ENCODE measurements at regions of chr16 and their contacts with region 1.

Region 1: GRCh38 chr16:49921791-49922456 is 66.0 kb upstream of the ZNF423 start:
- DNase-seq: peak; percentile 75
- H3K4me3 ChIP-seq: no peak overlapping the region
- H3K27ac ChIP-seq: no peak overlapping the region
- H3K4me1 ChIP-seq: no peaks in the 10 kb centered on the region
- H3K27me3 ChIP-seq: no peaks in the 10 kb centered on the region
- CTCF ChIP-seq: peak; percentile 81

Region 2: GRCh38 chr16:49452578-49452977 is 469.3 kb before region 1 on chr16:
- CTCF ChIA-PET with region 1: interaction called, 11 read pairs
- POLR2A ChIA-PET with region 1: no interaction called
- intact Hi-C with region 1: no loop called
- DNase-seq: no peak
- H3K4me3 ChIP-seq: no peak overlapping the region
- H3K27ac ChIP-seq: no peak overlapping the region
- H3K4me1 ChIP-seq: no peaks in the 10 kb centered on the region
- H3K27me3 ChIP-seq: no peaks in the 10 kb centered on the region
- CTCF ChIP-seq: no peak

Region 3: DNA sequence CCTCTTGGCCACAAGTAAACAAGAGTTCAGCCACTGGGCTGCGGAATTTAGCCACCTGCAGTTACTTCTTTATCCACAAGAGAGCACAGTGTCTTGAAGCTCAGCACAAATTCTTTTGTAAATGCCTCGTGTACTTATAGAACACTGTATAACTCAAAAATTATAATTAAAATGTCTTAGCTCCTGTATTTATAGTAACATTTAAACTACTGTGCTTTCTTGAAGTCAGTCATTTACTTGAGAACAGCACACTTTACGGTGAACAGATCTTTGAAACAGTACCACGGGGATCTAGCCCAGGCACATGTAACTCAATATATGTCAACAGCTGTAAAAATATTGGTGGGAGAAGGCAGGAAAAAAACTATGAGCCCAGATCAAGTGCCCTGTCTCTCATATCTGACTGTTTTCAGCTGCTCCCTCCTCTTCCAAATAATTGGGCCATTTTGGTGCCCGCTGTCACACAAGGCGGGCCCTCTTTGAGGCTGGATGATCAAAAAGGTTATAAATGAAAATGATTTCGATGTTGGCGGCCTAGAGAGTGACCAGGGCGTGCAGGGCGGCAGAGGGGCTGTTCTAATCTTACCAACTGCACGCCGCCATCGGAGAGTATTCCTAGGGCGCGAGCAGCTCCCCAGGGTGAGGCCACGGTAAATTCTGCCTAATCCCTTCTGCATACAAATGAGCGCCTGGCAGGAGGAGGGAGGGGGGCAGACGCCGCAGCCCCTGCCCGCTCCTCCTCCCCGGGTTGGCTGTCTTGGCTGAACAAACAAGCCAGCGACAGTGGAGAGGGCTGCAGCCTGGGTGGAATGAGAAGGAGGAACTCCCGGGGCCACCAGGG is 365.1 kb before region 1 on chr16:
- CTCF ChIA-PET with region 1: interaction called, 8 read pairs
- POLR2A ChIA-PET with region 1: no interaction called
- intact Hi-C with region 1: loop called (anchors 5 kb)
- DNase-seq: peak; percentile 82
- H3K4me3 ChIP-seq: peak overlapping the region; percentile 27
- H3K27ac ChIP-seq: peak overlapping the region; percentile 74
- H3K4me1 ChIP-seq: peaks cover 45% of the 10 kb centered on the region
- H3K27me3 ChIP-seq: no peaks in the 10 kb centered on the region
- CTCF ChIP-seq: peak; percentile 80

Region 4: DNA sequence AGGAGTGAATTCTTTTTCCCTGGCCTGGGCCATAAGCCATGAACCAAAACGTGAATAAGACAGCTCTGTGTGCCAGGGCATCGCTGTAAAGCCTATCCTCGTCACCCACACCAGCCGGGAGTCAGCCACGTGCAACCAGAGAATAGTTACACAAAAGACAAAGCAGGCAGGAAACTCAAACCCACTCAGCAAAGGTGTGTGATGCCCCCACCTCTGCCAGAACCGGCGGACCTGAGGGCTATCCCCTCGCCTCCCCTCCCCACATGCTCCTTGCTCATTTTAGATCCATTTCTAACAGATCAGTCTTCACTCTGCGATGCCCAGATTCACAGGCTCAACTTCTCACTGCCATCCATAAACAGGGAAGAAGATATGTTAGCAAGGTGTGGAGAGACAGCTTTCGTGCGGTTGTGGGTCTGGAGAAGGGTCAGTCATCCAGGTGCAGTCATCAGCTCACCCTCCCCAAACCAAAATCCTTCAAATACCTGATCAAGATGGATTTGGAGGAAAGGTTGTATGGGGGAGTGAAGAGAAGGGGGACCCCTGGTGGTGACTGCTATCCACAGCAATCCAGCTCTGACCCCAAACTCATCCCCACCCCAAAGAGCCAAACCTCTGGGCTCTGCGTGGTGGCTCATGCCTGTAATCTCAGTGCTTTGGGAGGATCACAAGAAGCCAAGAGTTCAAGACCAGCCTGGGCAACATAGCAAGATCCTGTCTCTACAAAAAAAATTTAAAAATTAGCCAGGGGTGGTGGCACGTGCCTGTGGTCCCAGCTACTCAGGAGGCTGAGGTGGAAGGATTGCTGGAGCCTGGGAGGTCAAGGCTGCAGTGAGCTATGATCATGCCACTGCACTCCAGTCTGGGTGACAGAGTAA is 329.1 kb before region 1 on chr16:
- CTCF ChIA-PET with region 1: no interaction called
- POLR2A ChIA-PET with region 1: no interaction called
- intact Hi-C with region 1: loop called (anchors 10 kb)
- DNase-seq: peak; percentile 52
- H3K4me3 ChIP-seq: no peak overlapping the region
- H3K27ac ChIP-seq: no peak overlapping the region
- H3K4me1 ChIP-seq: peaks cover 17% of the 10 kb centered on the region
- H3K27me3 ChIP-seq: no peaks in the 10 kb centered on the region
- CTCF ChIP-seq: peak; percentile 78

Region 5: GRCh38 chr16:49716339-49716934 is 205.5 kb before region 1 on chr16:
- CTCF ChIA-PET with region 1: no interaction called
- POLR2A ChIA-PET with region 1: no interaction called
- intact Hi-C with region 1: no loop called
- DNase-seq: no peak
- H3K4me3 ChIP-seq: no peak overlapping the region
- H3K27ac ChIP-seq: no peak overlapping the region
- H3K4me1 ChIP-seq: no peaks in the 10 kb centered on the region
- H3K27me3 ChIP-seq: no peaks in the 10 kb centered on the region
- CTCF ChIP-seq: no peak

Region 6: GRCh38 chr16:50573947-50574744 is 652.2 kb after region 1 on chr16:
- CTCF ChIA-PET with region 1: no interaction called
- POLR2A ChIA-PET with region 1: no interaction called
- intact Hi-C with region 1: no loop called
- DNase-seq: no peak
- H3K4me3 ChIP-seq: no peak overlapping the region
- H3K27ac ChIP-seq: no peak overlapping the region
- H3K4me1 ChIP-seq: no peaks in the 10 kb centered on the region
- H3K27me3 ChIP-seq: peaks cover 5% of the 10 kb centered on the region
- CTCF ChIP-seq: no peak